ENCODE measurements at regions of chr10 and their contacts with region 1.

Region 1: GRCh38 chr10:125023862-125024489 is 82.1 kb downstream of the ZRANB1 start:
- DNase-seq: no peak
- ATAC-seq: no peak
- H3K4me3 ChIP-seq: no peak overlapping the region
- H3K4me3 Mint-ChIP-seq: no peak overlapping the region
- H3K27ac ChIP-seq: no peak overlapping the region
- H3K27ac Mint-ChIP-seq: no peak overlapping the region
- H3K4me1 ChIP-seq: no peaks in the 10 kb centered on the region
- H3K4me1 Mint-ChIP-seq: peaks cover 13% of the 10 kb centered on the region
- H3K27me3 ChIP-seq: peaks cover 0 to 12% (median 0%) of the 10 kb centered on the region in 4 experiments
- H3K27me3 Mint-ChIP-seq: peaks cover 50% of the 10 kb centered on the region
- CTCF ChIP-seq: no peak

Region 2: DNA sequence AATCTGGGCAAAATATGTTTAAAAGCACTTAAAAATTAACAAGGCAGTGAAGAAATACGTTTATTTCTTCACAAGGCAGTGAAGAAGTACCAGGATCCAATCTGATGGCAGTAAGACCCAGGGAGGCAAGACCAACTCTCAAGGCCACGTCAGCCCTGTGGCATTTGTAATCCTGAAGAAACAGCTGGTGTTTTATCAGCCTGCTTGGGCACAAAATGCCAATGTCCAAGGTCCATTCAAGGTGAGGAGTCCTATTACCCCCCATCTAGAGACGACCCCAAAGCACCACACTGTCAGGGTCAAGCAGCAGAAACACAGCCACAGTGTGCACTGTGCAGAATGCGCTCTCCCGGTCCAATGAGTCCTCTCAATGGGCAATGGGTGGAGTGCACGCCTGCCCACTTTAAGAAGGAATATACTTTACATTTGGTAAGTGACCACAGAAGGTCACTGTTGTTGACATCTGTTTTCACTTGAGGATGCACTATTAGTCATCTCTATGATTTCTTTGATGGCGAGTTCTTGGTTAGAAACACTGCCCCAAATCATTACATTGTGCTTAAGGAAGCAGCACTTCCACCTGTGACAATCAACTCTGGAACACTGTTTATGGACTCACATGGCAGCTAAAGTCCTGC is 1145.2 kb before region 1 on chr10:
- CTCF ChIA-PET with region 1: no interaction called
- POLR2A ChIA-PET with region 1: no interaction called
- intact Hi-C with region 1: loop called (anchors 5 kb)
- DNase-seq: no peak
- ATAC-seq: no peak
- H3K4me3 ChIP-seq: no peak overlapping the region
- H3K4me3 Mint-ChIP-seq: no peak overlapping the region
- H3K27ac ChIP-seq: no peak overlapping the region
- H3K27ac Mint-ChIP-seq: no peak overlapping the region
- H3K4me1 ChIP-seq: no peaks in the 10 kb centered on the region
- H3K4me1 Mint-ChIP-seq: no peaks in the 10 kb centered on the region
- H3K27me3 ChIP-seq: no peaks in the 10 kb centered on the region
- H3K27me3 Mint-ChIP-seq: no peaks in the 10 kb centered on the region
- CTCF ChIP-seq: no peak

Region 3: GRCh38 chr10:125038637-125039036 is 14.7 kb after region 1 on chr10:
- CTCF ChIA-PET with region 1: no interaction called
- POLR2A ChIA-PET with region 1: no interaction called
- intact Hi-C with region 1: no loop called
- DNase-seq: no peak
- ATAC-seq: no peak
- H3K4me3 ChIP-seq: no peak overlapping the region
- H3K4me3 Mint-ChIP-seq: no peak overlapping the region
- H3K27ac ChIP-seq: no peak overlapping the region
- H3K27ac Mint-ChIP-seq: no peak overlapping the region
- H3K4me1 ChIP-seq: no peaks in the 10 kb centered on the region
- H3K4me1 Mint-ChIP-seq: no peaks in the 10 kb centered on the region
- H3K27me3 ChIP-seq: peaks cover 0 to 4% (median 0%) of the 10 kb centered on the region in 4 experiments
- H3K27me3 Mint-ChIP-seq: peaks cover 31% of the 10 kb centered on the region
- CTCF ChIP-seq: no peak

Region 4: GRCh38 chr10:125392154-125392553 is 368.2 kb after region 1 on chr10:
- CTCF ChIA-PET with region 1: no interaction called
- POLR2A ChIA-PET with region 1: no interaction called
- intact Hi-C with region 1: no loop called
- DNase-seq: no peak
- ATAC-seq: no peak
- H3K4me3 ChIP-seq: no peak overlapping the region
- H3K4me3 Mint-ChIP-seq: no peak overlapping the region
- H3K27ac ChIP-seq: no peak overlapping the region
- H3K27ac Mint-ChIP-seq: no peak overlapping the region
- H3K4me1 ChIP-seq: no peaks in the 10 kb centered on the region
- H3K4me1 Mint-ChIP-seq: no peaks in the 10 kb centered on the region
- H3K27me3 ChIP-seq: no peaks in the 10 kb centered on the region
- H3K27me3 Mint-ChIP-seq: peaks cover 14% of the 10 kb centered on the region
- CTCF ChIP-seq: no peak